Kidney (tissue), 22 donors: ENCODE measurements at regions of chr16 and their contacts with region 1.

Region 1: DNA sequence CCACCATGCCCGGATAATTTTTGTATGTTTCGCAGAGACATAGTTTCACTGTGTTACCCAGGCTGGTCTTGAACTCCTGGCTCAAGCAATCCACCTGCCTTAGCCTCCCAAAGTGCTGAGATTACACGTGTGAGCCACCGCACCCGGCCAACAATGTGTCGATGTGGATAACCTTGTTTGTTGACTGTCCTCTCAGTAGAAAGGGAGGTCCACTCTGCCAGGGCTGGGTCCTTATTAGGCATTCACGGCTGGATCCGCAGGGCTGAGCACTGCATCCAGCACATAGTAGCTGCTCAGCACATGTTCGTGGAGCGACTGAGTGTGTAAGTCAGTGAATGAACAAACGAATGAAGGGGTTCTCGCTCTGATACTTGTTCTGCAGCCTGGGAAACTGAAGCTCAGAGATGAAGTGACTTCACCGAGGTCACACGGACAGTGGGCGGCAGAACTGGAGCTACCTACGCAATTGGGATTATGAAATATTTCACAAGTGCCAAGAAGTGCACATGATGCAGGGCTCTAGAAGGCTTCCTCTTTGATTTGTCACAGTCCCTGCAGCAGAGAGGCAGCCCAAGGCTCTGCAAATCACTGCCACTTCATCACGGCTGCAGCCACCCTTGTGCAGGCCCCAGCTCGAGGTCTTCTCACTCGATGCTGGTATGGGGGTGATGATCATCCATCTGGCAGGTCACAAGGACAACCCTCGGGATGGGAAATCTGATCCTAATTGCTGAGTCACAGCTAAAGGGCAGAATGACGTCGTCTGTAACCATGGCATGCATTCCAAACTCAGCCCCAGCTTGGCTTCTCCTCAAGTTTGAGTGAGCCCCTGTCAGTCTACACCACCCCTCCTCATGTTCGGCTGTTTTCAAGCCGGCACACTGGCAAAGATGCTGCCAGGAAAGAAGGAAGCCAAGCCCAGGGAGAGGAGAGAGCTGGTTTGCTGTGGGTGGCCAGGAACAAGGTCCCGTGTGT is 28.0 kb upstream of the SNN start:
- DNase-seq: peak in 4 of 5 donors; percentile 58 to 94 (median 72)
- H3K4me3 ChIP-seq: no peak overlapping the region
- H3K27ac ChIP-seq: peak overlapping the region; percentile 75 to 92
- H3K4me1 ChIP-seq: peaks cover 0 to 16% (median 13%) of the 10 kb centered on the region in 3 donors
- H3K27me3 ChIP-seq: no peaks in the 10 kb centered on the region
- CTCF ChIP-seq: no peak

Region 2: DNA sequence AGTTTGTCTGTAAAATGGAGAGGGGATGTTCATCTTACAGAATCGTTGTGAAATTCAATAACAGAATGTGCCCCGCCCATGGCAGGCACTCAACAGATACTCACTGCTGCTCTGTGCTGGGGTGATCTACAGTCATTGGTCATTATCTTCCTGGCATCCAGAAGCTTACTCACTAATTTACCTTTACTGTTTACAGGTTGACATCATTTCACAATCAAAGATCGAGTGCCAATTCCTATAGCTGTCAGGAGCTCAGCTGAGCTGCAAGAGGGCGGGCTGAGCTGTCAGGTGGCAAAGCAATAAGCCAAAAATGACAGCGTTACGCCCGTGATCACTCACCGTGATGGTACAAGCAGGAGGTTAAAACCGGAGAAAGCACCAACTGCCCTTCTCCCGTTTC is 104.7 kb before region 1 on chr16:
- intact Hi-C with region 1: loop called (anchors 10 kb)
- DNase-seq: peak in 1 of 5 donors; percentile 49
- H3K4me3 ChIP-seq: no peak overlapping the region
- H3K27ac ChIP-seq: no peak overlapping the region
- H3K4me1 ChIP-seq: no peaks in the 10 kb centered on the region
- H3K27me3 ChIP-seq: no peaks in the 10 kb centered on the region
- CTCF ChIP-seq: no peak

Region 3: GRCh38 chr16:11586856-11587642 is 53.2 kb before region 1 on chr16 and contains the start of gene LITAF:
- intact Hi-C with region 1: loop called (anchors 10 kb)
- DNase-seq: peak; percentile 69 to 91 (median 82)
- H3K4me3 ChIP-seq: peak within 1 kb of the TSS; percentile 62 to 75 (median 73)
- H3K27ac ChIP-seq: peak within 1 kb of the TSS; percentile 94 to 97
- H3K4me1 ChIP-seq: peaks cover 0 to 19% (median 3%) of the 10 kb centered on the region in 3 donors
- H3K27me3 ChIP-seq: no peaks in the 10 kb centered on the region
- CTCF ChIP-seq: no peak
- total RNA-seq, gene LITAF: 171 TPM

Region 4: DNA sequence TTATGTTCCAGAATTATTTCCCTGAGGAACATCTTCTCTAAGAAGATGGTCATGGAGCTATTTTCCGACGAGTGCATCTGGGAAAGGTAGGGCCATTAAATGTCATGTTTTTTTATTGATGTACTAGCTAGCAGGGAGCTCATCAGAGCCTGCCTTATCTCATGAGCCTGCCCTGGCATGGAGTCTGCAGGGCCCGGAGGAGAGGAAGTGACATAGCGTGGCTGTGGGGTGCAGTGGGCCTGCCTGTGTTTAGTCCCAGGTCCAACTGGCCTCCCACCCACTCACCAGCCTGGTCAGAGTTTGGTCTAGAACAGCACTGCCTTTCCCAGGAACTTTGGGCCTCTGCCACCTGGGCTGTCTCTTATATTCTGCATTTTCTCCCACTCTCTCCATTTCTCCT is 726.1 kb after region 1 on chr16:
- intact Hi-C with region 1: no loop called
- DNase-seq: no peak
- H3K4me3 ChIP-seq: no peak overlapping the region
- H3K27ac ChIP-seq: no peak overlapping the region
- H3K4me1 ChIP-seq: peaks cover 0 to 4% (median 0%) of the 10 kb centered on the region in 3 donors
- H3K27me3 ChIP-seq: no peaks in the 10 kb centered on the region
- CTCF ChIP-seq: no peak